ENCODE measurements at regions of chr1 and their contacts with region 1.

Region 1: GRCh38 chr1:57644667-57645066 is 220.8 kb upstream of the DAB1 start:
- DNase-seq: no peak
- ATAC-seq: no peak
- H3K4me3 ChIP-seq: no peak overlapping the region
- H3K27ac ChIP-seq: no peak overlapping the region
- H3K4me1 ChIP-seq: no peaks in the 10 kb centered on the region
- H3K27me3 ChIP-seq: no peaks in the 10 kb centered on the region; the same call in 1 of the 2 replicates
- CTCF ChIP-seq: no peak

Region 2: GRCh38 chr1:57384901-57385300 is 259.8 kb before region 1 on chr1:
- CTCF ChIA-PET with region 1: no interaction called
- POLR2A ChIA-PET with region 1: no interaction called
- in situ Hi-C with region 1: no loop called
- intact Hi-C with region 1: no loop called
- DNase-seq: no peak
- ATAC-seq: no peak
- H3K4me3 ChIP-seq: no peak overlapping the region
- H3K27ac ChIP-seq: no peak overlapping the region
- H3K4me1 ChIP-seq: no peaks in the 10 kb centered on the region
- H3K27me3 ChIP-seq: no peaks in the 10 kb centered on the region
- CTCF ChIP-seq: no peak

Region 3: GRCh38 chr1:57440096-57440495 is 204.6 kb before region 1 on chr1:
- CTCF ChIA-PET with region 1: no interaction called
- POLR2A ChIA-PET with region 1: no interaction called
- in situ Hi-C with region 1: no loop called
- intact Hi-C with region 1: no loop called
- DNase-seq: no peak
- ATAC-seq: no peak
- H3K4me3 ChIP-seq: no peak overlapping the region
- H3K27ac ChIP-seq: no peak overlapping the region
- H3K4me1 ChIP-seq: no peaks in the 10 kb centered on the region
- H3K27me3 ChIP-seq: no peaks in the 10 kb centered on the region
- CTCF ChIP-seq: no peak

Region 4: DNA sequence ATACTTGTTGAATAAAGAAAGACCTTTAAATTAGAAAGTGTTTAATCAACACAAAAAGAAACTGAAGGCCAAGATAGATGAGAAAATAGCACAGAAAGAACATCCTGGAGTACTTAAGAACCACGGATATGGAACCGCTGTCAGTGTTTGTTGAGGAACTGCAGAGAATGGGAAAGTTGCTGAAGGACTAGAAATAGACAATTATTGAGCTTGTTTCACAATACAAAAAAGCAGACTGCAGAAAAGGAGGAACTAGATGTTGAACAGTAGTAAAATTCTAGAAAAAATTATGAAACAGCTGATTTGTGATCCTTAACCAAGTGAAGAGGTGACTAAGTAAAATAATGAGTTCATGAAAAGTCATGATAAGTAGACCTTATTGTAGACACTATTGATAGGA is 1025.5 kb after region 1 on chr1:
- CTCF ChIA-PET with region 1: no interaction called
- POLR2A ChIA-PET with region 1: interaction called, 10 read pairs
- in situ Hi-C with region 1: no loop called
- intact Hi-C with region 1: no loop called
- DNase-seq: no peak
- ATAC-seq: no peak
- H3K4me3 ChIP-seq: no peak overlapping the region
- H3K27ac ChIP-seq: no peak overlapping the region
- H3K4me1 ChIP-seq: no peaks in the 10 kb centered on the region
- H3K27me3 ChIP-seq: no peaks in the 10 kb centered on the region
- CTCF ChIP-seq: no peak